OCI-LY7 (cell line): ENCODE measurements at regions of chr3 and their contacts with region 1.

Region 1: DNA sequence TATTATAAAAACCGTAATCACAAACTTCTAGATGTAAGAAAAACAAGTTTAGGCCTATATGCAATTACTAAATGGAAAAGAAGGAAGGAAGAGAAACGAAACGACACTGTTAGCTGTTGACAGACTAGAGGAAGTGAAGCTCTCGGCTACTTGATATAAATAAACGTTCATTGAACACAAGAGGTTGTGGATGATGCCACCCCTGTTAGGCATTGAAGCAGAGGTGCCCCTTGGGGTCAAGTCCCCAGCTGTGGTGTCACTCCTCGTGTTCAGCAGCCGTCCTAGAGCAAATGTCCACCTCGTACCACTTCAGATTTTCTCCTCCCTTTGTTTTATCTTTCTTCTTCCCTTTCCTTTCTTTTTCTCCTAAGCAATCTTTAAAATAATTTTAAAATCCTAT is 146.5 kb upstream of the UBE2E1 start:
- DNase-seq: peak; percentile 96
- H3K4me3 ChIP-seq: peak overlapping the region; percentile 53
- H3K27ac ChIP-seq: peak overlapping the region; percentile 97
- H3K4me1 ChIP-seq: peaks cover 93% of the 10 kb centered on the region
- CTCF ChIP-seq: no peak

Region 2: GRCh38 chr3:23611737-23612295 is 47.5 kb before region 1 on chr3:
- CTCF ChIA-PET with region 1: interaction called, 10 read pairs
- POLR2A ChIA-PET with region 1: interaction called, 3 read pairs
- intact Hi-C with region 1: no loop called
- DNase-seq: peak; percentile 64
- H3K4me3 ChIP-seq: peak overlapping the region; percentile 41
- H3K27ac ChIP-seq: peak overlapping the region; percentile 5
- H3K4me1 ChIP-seq: peaks cover 46% of the 10 kb centered on the region
- CTCF ChIP-seq: no peak

Region 3: GRCh38 chr3:23648326-23648995 is 10.8 kb before region 1 on chr3:
- CTCF ChIA-PET with region 1: interaction called, 4 read pairs
- POLR2A ChIA-PET with region 1: interaction called, 91 read pairs
- intact Hi-C with region 1: no loop called
- DNase-seq: no peak
- H3K4me3 ChIP-seq: no peak overlapping the region
- H3K27ac ChIP-seq: peak overlapping the region; percentile 49
- H3K4me1 ChIP-seq: peaks cover 39% of the 10 kb centered on the region
- CTCF ChIP-seq: 0 out of 2 replicates have a peak, but pooled peaks have one; percentile 23